CD8-positive, alpha-beta memory T cell (primary cell): ENCODE measurements at regions of chr13 and their contacts with region 1.

Region 1: DNA sequence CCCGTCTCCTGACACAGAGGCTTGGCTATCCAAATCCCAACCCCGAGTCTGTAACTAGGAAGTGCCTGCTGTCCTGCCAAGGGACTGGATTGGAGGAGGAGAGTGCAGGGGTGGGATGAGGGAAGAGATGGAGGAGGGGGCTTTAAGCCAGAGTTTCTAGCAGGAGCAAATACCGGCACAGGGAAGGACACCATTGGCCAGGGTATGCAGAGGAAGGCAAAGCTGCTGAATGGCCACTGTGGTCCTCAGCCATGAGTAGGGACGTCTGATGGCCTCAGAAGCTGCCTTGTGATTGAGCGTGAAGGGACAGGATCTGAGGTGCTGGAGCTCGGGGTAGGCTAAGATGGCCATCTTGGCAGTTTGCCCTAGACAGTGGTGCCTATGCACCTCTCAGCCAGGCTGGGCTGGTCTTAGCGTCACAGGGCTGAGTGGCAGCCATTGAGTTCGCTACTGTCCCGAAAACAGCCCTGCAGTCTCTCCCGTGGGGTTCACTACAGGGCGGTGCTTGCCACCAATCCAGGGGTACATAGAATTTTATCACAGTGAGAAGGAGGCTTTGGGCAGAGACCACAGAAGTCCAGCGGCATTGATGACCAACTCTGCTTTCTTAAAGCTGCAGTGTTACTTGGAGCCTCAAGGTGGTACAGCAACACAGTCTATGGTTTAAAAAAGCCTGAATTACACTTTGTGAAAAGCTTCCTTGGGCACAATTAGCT is 61.8 kb downstream of the AKAP11 start:
- DNase-seq: peak in 2 of 5 donors; percentile 3 to 7
- H3K4me3 ChIP-seq: no peak overlapping the region
- H3K4me3 Mint-ChIP-seq: no peak overlapping the region
- H3K27ac ChIP-seq: no peak overlapping the region
- H3K27ac Mint-ChIP-seq: no peak overlapping the region
- H3K4me1 ChIP-seq: peaks cover 4% of the 10 kb centered on the region
- H3K4me1 Mint-ChIP-seq: peaks cover 14 to 22% (median 18%) of the 10 kb centered on the region in 3 donors
- H3K27me3 ChIP-seq: no peaks in the 10 kb centered on the region
- H3K27me3 Mint-ChIP-seq: no peaks in the 10 kb centered on the region

Region 2: GRCh38 chr13:42078128-42078808 is 255.5 kb before region 1 on chr13:
- CTCF ChIA-PET with region 1: no interaction called
- POLR2A ChIA-PET with region 1: no interaction called
- DNase-seq: no peak
- H3K4me3 ChIP-seq: no peak overlapping the region
- H3K4me3 Mint-ChIP-seq: no peak overlapping the region
- H3K27ac ChIP-seq: no peak overlapping the region
- H3K27ac Mint-ChIP-seq: no peak overlapping the region
- H3K4me1 ChIP-seq: no peaks in the 10 kb centered on the region
- H3K4me1 Mint-ChIP-seq: peaks cover 13 to 29% (median 21%) of the 10 kb centered on the region in 3 donors
- H3K27me3 ChIP-seq: no peaks in the 10 kb centered on the region
- H3K27me3 Mint-ChIP-seq: peaks cover 0 to 1% of the 10 kb centered on the region in 2 donors

Region 3: DNA sequence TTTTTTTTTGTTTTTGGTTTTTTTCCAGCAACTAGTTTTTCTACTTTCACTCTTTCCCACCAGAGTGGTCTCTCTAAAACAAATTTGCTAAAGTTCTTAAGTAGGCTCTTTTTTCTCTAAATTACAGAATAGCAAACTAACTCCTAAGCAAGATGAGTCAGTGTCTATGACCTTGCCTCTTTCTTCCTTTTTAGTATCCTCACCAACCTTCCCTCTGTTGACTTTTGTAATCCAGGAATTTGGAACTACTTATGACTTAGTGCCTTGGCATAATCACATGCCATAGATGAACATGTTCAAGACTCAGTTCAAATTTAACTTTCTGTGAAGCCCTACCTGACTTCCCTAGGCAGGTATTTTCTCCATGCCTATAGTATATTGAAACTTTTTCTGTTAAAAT is 94.1 kb before region 1 on chr13:
- CTCF ChIA-PET with region 1: no interaction called
- POLR2A ChIA-PET with region 1: no interaction called
- DNase-seq: no peak
- H3K4me3 ChIP-seq: no peak overlapping the region
- H3K4me3 Mint-ChIP-seq: no peak overlapping the region
- H3K27ac ChIP-seq: no peak overlapping the region
- H3K27ac Mint-ChIP-seq: peak overlapping the region in 1 of 8 donors; percentile 38
- H3K4me1 ChIP-seq: no peaks in the 10 kb centered on the region
- H3K4me1 Mint-ChIP-seq: no peaks in the 10 kb centered on the region
- H3K27me3 ChIP-seq: no peaks in the 10 kb centered on the region
- H3K27me3 Mint-ChIP-seq: no peaks in the 10 kb centered on the region

Region 4: DNA sequence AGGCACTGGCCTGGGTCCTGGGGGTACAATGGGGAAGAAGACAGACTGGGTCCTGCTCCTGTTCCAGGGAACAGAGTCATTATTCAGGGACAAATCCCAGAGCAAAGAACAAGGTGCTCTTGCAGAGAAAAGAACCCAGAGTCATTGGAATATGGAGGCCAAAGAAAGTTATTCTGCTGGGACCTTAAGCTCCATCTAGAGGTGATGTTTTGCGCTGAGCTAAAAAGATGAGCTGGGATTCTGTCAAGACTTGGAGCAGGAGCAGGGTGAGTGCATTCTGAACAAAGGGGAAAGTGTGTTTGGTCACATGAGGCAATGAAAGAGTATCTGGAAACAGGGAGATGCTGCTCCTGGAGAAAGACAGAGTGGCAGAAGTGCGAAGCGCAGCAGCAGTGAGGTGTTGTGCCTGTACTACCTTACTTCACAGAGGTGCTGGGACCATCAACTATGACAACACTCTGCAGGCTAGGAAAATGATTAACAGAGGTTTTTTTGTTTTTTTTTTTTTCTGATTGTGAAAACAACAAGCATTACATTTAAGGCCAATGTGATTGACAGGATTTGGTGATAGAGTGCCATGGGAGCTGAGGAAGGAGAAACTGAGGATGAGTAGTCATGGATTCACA is 144.9 kb after region 1 on chr13:
- CTCF ChIA-PET with region 1: interaction called, 14 read pairs
- POLR2A ChIA-PET with region 1: no interaction called
- DNase-seq: no peak
- H3K4me3 ChIP-seq: no peak overlapping the region
- H3K4me3 Mint-ChIP-seq: peak overlapping the region in 1 of 7 donors; percentile 7
- H3K27ac ChIP-seq: no peak overlapping the region
- H3K27ac Mint-ChIP-seq: no peak overlapping the region
- H3K4me1 ChIP-seq: no peaks in the 10 kb centered on the region
- H3K4me1 Mint-ChIP-seq: peaks cover 0 to 5% (median 0%) of the 10 kb centered on the region in 3 donors
- H3K27me3 ChIP-seq: no peaks in the 10 kb centered on the region
- H3K27me3 Mint-ChIP-seq: no peaks in the 10 kb centered on the region